Panc1 (cell line): ENCODE measurements at regions of chr22 and their contacts with region 1.

Region 1: GRCh38 chr22:29739346-29739875 is 19.6 kb downstream of the CABP7 start:
- DNase-seq: no peak
- ATAC-seq: no peak
- H3K4me3 ChIP-seq: no peak overlapping the region
- H3K27ac ChIP-seq: no peak overlapping the region
- H3K4me1 ChIP-seq: no peaks in the 10 kb centered on the region
- H3K27me3 ChIP-seq: no peaks in the 10 kb centered on the region
- CTCF ChIP-seq: no peak

Region 2: DNA sequence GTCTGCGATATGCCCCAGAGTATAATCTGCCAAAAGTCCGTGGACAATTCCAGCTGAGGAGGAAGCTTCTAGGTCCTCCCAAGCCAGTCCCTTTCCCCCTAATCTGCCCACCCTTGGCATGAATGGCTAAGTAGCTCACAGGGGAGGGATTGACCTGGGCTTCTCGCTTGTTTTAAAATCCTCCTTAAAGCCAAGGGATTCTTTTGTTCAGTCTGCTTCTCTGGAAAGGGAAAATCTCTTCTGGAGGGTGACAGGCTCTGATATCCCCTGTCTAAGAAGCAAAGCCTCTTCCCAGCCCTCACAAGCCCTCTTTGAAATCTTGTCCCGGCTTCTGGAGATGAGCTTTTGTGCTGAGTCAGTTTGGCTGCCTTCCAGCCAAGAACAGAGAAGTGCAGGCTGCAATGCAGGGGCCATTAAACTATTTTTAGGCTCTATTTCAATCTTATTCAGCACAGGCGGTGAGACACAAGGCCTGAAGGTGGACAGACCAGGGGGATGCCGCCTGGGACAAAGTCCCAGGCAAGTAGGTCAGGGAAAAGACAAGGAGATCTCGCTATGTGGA is 235.5 kb before region 1 on chr22:
- CTCF ChIA-PET with region 1: no interaction called
- POLR2A ChIA-PET with region 1: no interaction called
- in situ Hi-C with region 1: no loop called
- intact Hi-C with region 1: no loop called
- DNase-seq: no peak
- ATAC-seq: no peak
- H3K4me3 ChIP-seq: no peak overlapping the region
- H3K27ac ChIP-seq: no peak overlapping the region
- H3K4me1 ChIP-seq: no peaks in the 10 kb centered on the region
- H3K27me3 ChIP-seq: no peaks in the 10 kb centered on the region
- CTCF ChIP-seq: no peak

Region 3: GRCh38 chr22:29750559-29751538 is 11.4 kb after region 1 on chr22:
- CTCF ChIA-PET with region 1: no interaction called
- POLR2A ChIA-PET with region 1: interaction called, 11 read pairs
- in situ Hi-C with region 1: no loop called
- intact Hi-C with region 1: no loop called
- DNase-seq: no peak
- ATAC-seq: no peak
- H3K4me3 ChIP-seq: no peak overlapping the region
- H3K27ac ChIP-seq: no peak overlapping the region
- H3K4me1 ChIP-seq: no peaks in the 10 kb centered on the region
- H3K27me3 ChIP-seq: no peaks in the 10 kb centered on the region
- CTCF ChIP-seq: no peak